MCF 10A (cell line): ENCODE measurements at regions of chr5 and their contacts with region 1.

Region 1: GRCh38 chr5:56270568-56271392 is 37.6 kb upstream of the ANKRD55 start:
- DNase-seq: peak; percentile 85
- H3K4me3 Mint-ChIP-seq: no peak overlapping the region
- H3K27ac Mint-ChIP-seq: no peak overlapping the region
- H3K4me1 Mint-ChIP-seq: peaks cover 5% of the 10 kb centered on the region
- H3K27me3 Mint-ChIP-seq: no peaks in the 10 kb centered on the region
- CTCF ChIP-seq: peak; percentile 98

Region 2: DNA sequence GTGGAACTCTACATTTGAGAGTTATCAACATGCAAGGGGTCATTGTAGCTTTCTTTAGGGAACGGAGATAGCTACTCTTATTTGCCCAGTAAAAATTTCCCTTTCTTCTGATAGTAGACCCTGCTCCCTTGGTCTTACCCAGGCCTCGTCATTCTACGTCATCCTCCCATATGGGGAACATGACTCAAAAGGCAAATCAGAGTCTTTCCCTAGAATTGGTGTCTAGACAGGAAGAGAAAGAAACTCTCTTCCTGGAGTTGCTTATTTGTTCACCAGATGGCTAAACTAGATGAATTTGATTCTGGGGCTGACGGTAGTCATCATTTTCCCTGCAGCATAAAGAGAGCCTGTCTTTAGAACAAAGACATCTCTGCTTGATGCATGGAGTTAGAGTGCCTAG is 546.5 kb before region 1 on chr5:
- CTCF ChIA-PET with region 1: no interaction called
- POLR2A ChIA-PET with region 1: no interaction called
- intact Hi-C with region 1: no loop called
- DNase-seq: no peak
- H3K4me3 Mint-ChIP-seq: no peak overlapping the region
- H3K27ac Mint-ChIP-seq: no peak overlapping the region
- H3K4me1 Mint-ChIP-seq: no peaks in the 10 kb centered on the region
- H3K27me3 Mint-ChIP-seq: no peaks in the 10 kb centered on the region
- CTCF ChIP-seq: no peak

Region 3: DNA sequence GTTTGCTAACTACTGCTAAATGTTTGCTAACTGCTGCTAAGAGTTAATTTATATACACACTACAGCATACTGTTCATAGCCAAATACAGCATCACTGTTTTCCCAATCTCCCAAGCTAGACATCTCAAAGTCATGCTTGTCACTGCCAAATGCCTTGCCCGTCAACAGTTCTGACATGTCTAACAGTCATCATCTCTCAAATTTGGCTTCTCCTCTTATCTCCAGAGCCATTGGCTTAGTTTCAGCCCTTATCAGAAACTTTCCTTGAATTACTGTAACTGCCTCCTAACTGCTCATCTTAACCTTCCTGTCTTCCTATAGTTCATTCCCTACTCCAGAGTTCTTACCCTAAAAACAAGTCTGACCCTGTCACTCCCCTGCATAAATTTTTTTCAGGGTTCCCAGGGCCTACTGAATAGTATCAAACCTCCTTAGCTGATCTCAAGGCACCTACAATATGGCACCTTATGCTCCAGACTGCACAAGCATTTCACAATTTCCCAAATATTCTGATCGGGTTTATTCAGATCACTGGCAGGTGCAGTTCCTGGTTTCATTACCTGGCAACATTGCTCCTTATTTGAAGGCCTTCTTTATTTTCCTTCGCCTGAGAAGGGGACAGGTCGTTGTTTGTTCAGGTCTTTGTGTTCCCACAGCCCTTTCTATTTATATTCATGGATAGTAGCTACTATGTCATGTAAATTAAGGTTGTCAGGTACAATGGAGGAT is 18.3 kb after region 1 on chr5:
- CTCF ChIA-PET with region 1: interaction called, 17 read pairs
- POLR2A ChIA-PET with region 1: no interaction called
- intact Hi-C with region 1: no loop called
- DNase-seq: no peak
- H3K4me3 Mint-ChIP-seq: no peak overlapping the region
- H3K27ac Mint-ChIP-seq: no peak overlapping the region
- H3K4me1 Mint-ChIP-seq: no peaks in the 10 kb centered on the region
- H3K27me3 Mint-ChIP-seq: no peaks in the 10 kb centered on the region
- CTCF ChIP-seq: no peak

Region 4: GRCh38 chr5:56814963-56815658 is 544.3 kb after region 1 on chr5 and contains the start of gene MAP3K1:
- CTCF ChIA-PET with region 1: interaction called, 8 read pairs
- POLR2A ChIA-PET with region 1: interaction called, 3 read pairs
- intact Hi-C with region 1: loop called (anchors 1 kb)
- DNase-seq: peak; percentile 73
- H3K4me3 Mint-ChIP-seq: peak within 1 kb of the TSS; percentile 83
- H3K27ac Mint-ChIP-seq: peak within 1 kb of the TSS; percentile 81
- H3K4me1 Mint-ChIP-seq: peaks cover 14% of the 10 kb centered on the region
- H3K27me3 Mint-ChIP-seq: no peaks in the 10 kb centered on the region
- CTCF ChIP-seq: no peak
- total RNA-seq, gene MAP3K1: 6.6 and 7.9 TPM in 2 replicates

Region 5: DNA sequence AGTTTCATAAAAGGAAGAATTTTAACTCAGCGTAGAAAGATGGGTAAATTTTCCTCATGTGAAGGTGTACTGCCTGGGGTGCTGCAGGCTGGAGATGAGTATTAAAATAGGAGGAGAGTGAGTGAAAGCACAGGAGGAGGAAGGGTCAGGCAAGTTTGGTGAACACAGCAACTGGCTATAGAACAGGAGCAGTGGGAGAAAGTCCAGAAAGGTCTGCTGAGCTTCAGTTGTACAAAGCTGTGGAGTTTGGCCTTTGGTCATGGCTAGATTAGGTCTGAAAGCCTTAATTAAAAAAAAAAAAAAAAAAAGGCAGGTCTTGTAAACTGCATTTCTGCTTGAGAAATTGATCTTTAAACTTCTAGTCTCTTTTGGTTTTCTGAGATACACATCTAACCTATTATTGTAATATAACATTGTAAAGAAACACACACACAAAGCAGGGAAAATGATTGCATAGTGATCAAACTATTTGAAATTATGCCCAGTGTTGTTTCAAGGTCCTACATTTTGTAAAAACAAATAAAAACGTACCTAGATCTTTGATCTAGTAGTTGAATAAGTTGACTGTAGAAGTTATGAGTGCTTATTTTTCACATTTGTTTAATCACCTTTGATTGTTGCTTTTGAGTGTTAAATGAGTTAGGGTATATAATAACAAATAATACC is 588.1 kb after region 1 on chr5:
- CTCF ChIA-PET with region 1: interaction called, 17 read pairs
- POLR2A ChIA-PET with region 1: no interaction called
- intact Hi-C with region 1: no loop called
- DNase-seq: no peak
- H3K4me3 Mint-ChIP-seq: no peak overlapping the region
- H3K27ac Mint-ChIP-seq: no peak overlapping the region
- H3K4me1 Mint-ChIP-seq: peaks cover 10% of the 10 kb centered on the region
- H3K27me3 Mint-ChIP-seq: no peaks in the 10 kb centered on the region
- CTCF ChIP-seq: no peak

Region 6: GRCh38 chr5:57137401-57137800 is 866.6 kb after region 1 on chr5:
- CTCF ChIA-PET with region 1: interaction called, 4 read pairs
- POLR2A ChIA-PET with region 1: no interaction called
- intact Hi-C with region 1: loop called (anchors 1 kb)
- DNase-seq: no peak
- H3K4me3 Mint-ChIP-seq: no peak overlapping the region
- H3K27ac Mint-ChIP-seq: no peak overlapping the region
- H3K4me1 Mint-ChIP-seq: no peaks in the 10 kb centered on the region
- H3K27me3 Mint-ChIP-seq: no peaks in the 10 kb centered on the region
- CTCF ChIP-seq: no peak